CD4-positive, alpha-beta T cell (primary cell): ENCODE measurements at regions of chr4 and their contacts with region 1.

Region 1: DNA sequence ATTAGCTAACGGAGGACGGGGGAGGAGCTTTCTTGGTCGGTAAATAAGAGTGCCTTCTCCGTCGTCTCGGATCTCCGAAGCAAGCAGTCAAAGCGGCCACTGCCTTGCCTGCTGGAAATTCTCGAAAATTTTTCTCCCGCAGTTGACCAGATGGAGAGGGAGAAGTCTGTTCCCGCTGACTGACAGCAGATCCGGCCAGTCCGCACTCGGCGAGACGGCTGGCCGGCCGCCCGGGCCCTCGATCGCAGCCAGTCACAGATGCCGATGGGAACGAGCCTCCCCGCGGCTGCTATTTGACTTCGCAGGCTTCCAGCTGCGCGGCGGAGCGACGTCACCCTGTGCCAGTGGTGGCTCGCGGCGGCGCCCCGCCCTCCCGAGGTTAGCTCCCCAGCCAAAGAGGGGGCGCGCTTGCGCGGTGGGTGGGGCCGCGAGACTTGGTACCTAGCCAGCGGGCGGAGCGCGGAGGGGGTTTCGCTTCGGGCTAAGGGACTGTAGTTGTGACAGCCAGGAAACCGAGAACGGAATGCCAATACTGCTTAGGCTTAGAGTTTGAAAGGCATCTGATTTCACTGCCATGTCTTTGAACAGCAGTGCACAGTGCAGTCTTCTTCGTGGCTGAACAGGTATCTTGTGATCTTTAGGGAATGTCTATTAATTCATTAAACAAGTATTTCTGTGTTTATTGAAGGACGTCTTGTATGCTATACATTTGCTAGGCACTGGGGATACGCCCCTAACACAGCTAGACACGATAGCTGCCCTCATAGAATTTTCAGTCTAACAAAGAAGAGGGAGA is at the start of gene PPM1K:
- DNase-seq: peak; percentile 98 to 100 (median 99)
- ATAC-seq: peak; percentile 79
- H3K4me3 ChIP-seq: peak within 1 kb of the TSS; percentile 90
- H3K4me3 Mint-ChIP-seq: peak within 1 kb of the TSS; percentile 95
- H3K27ac ChIP-seq: peak within 1 kb of the TSS; percentile 98
- H3K27ac Mint-ChIP-seq: peak within 1 kb of the TSS; percentile 99
- H3K4me1 ChIP-seq: peaks cover 30% of the 10 kb centered on the region
- H3K4me1 Mint-ChIP-seq: peaks cover 45% of the 10 kb centered on the region
- H3K27me3 ChIP-seq: no peaks in the 10 kb centered on the region
- H3K27me3 Mint-ChIP-seq: no peaks in the 10 kb centered on the region
- CTCF ChIP-seq: peak; percentile 9
- total RNA-seq, gene PPM1K: 71.0 to 78.1 TPM

Region 2: DNA sequence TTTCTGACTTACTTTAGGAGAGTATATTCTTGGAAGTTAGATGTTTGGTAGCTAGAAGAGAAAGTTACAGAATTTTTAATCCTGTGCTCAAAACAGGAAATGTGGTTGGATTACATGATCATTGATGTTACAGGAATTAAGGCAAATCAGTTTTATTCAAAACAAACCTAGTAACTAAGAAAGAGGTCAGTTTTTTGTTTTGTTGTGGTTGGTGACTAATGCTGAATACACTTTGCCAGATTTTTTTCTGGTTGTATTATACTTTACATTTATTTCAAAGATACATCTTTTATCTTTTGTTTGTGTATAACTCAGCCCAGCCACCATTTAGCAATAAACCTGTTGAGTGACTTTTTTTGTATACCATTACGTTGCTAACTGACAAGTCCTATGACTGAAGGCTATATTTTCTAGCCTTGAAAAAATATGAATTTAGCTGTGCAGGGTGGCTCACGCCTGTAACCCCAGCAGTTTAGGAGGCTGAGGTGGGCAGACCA is 1180.9 kb before region 1 on chr4:
- CTCF ChIA-PET with region 1: no interaction called
- POLR2A ChIA-PET with region 1: no interaction called
- intact Hi-C with region 1: loop called in 1 of 2 experiments (anchors 5 kb)
- DNase-seq: peak in 4 of 14 experiments; percentile 8 to 75 (median 70)
- ATAC-seq: peak; percentile 77
- H3K4me3 ChIP-seq: no peak overlapping the region
- H3K4me3 Mint-ChIP-seq: peak overlapping the region; percentile 78
- H3K27ac ChIP-seq: peak overlapping the region; percentile 78 to 88
- H3K27ac Mint-ChIP-seq: peak overlapping the region; percentile 93
- H3K4me1 ChIP-seq: peaks cover 16% of the 10 kb centered on the region
- H3K4me1 Mint-ChIP-seq: peaks cover 67% of the 10 kb centered on the region
- H3K27me3 ChIP-seq: no peaks in the 10 kb centered on the region
- H3K27me3 Mint-ChIP-seq: no peaks in the 10 kb centered on the region
- CTCF ChIP-seq: no peak

Region 3: GRCh38 chr4:88297725-88298454 is 13.3 kb after region 1 on chr4:
- CTCF ChIA-PET with region 1: interaction called, 3 read pairs
- POLR2A ChIA-PET with region 1: interaction called, 10 read pairs
- intact Hi-C with region 1: no loop called
- DNase-seq: no peak
- ATAC-seq: no peak
- H3K4me3 ChIP-seq: no peak overlapping the region
- H3K4me3 Mint-ChIP-seq: no peak overlapping the region
- H3K27ac ChIP-seq: no peak overlapping the region
- H3K27ac Mint-ChIP-seq: no peak overlapping the region
- H3K4me1 ChIP-seq: no peaks in the 10 kb centered on the region
- H3K4me1 Mint-ChIP-seq: no peaks in the 10 kb centered on the region
- H3K27me3 ChIP-seq: no peaks in the 10 kb centered on the region
- H3K27me3 Mint-ChIP-seq: no peaks in the 10 kb centered on the region
- CTCF ChIP-seq: no peak

Region 4: DNA sequence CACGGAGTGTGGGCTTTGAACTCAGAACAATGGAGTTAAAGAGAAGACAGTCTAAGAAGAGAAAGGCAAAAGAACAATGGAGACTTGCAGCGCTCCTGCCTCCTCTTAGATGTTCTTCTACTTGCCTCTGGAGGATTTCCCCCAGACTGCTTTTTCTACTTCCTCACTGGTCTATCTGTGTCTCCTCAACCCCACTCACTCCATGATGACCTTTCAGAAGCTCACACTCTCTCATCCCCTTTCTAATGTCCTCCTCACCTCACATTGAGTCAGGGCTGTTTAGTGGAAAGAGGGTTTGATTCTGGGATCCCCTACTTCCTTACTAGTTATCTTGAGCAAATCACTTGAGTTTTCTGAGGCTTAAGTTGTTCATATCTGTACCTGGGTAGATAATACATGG is 81.8 kb after region 1 on chr4:
- CTCF ChIA-PET with region 1: no interaction called
- POLR2A ChIA-PET with region 1: interaction called, 11 read pairs
- intact Hi-C with region 1: no loop called
- DNase-seq: no peak
- ATAC-seq: no peak
- H3K4me3 ChIP-seq: no peak overlapping the region
- H3K4me3 Mint-ChIP-seq: no peak overlapping the region
- H3K27ac ChIP-seq: no peak overlapping the region
- H3K27ac Mint-ChIP-seq: no peak overlapping the region
- H3K4me1 ChIP-seq: no peaks in the 10 kb centered on the region
- H3K4me1 Mint-ChIP-seq: no peaks in the 10 kb centered on the region
- H3K27me3 ChIP-seq: no peaks in the 10 kb centered on the region
- H3K27me3 Mint-ChIP-seq: no peaks in the 10 kb centered on the region
- CTCF ChIP-seq: no peak

Region 5: DNA sequence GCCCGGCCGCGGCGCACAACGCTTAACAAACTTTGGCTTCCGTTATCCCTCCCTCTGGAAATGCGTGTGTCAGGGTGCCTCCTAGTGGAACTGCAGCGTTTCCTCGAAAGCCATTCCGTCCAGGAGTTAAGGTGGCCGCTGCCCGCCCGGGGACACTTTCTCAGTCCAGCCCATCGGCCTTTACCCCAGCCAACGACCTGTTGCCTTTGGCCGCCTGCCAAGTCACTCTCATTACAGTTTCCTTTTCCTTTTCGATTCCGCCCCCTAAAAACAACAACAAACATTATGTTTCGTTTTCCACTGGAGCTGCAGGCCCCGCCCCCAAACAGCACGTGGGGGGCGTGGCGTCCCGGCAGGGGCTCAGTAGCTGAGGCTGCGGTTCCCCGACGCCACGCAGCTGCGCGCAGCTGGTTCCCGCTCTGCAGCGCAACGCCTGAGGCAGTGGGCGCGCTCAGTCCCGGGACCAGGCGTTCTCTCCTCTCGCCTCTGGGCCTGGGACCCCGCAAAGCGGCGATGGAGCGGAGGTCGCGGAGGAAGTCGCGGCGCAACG is 172.2 kb after region 1 on chr4 and contains the start of gene HERC5:
- CTCF ChIA-PET with region 1: interaction called, 4 read pairs
- POLR2A ChIA-PET with region 1: interaction called, 155 read pairs
- intact Hi-C with region 1: loop called (anchors 1 to 2 kb)
- DNase-seq: peak; percentile 83 to 97 (median 90)
- ATAC-seq: peak; percentile 96
- H3K4me3 ChIP-seq: peak within 1 kb of the TSS; percentile 85
- H3K4me3 Mint-ChIP-seq: peak within 1 kb of the TSS; percentile 96
- H3K27ac ChIP-seq: peak within 1 kb of the TSS; percentile 6 to 65
- H3K27ac Mint-ChIP-seq: peak within 1 kb of the TSS; percentile 85
- H3K4me1 ChIP-seq: peaks cover 20% of the 10 kb centered on the region
- H3K4me1 Mint-ChIP-seq: peaks cover 42% of the 10 kb centered on the region
- H3K27me3 ChIP-seq: no peaks in the 10 kb centered on the region
- H3K27me3 Mint-ChIP-seq: no peaks in the 10 kb centered on the region
- CTCF ChIP-seq: peak; percentile 32
- total RNA-seq, gene HERC5: 23.6 to 23.9 TPM

Region 6: DNA sequence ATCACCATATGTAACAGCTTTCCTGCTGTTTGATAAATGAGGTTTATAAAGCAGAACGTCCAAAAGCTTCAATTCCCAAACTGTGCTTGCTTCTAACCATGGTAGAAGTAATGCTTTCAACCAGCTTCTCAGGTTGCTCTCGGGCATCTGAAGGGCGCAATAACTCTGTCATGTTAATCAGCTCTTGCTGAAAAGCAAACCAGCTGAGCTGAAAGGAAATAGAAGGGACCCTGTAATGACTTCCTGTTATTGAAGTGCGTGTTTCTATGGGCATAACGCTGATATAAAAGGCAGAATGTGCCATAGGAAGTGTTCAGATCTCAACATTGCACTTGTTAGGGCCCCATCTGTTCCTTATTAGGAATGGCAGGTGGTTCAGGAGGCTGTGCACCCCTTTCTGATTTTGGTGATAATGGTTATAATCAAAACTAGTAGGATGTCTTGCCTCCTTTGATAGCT is 328.8 kb after region 1 on chr4:
- CTCF ChIA-PET with region 1: no interaction called
- POLR2A ChIA-PET with region 1: interaction called, 37 read pairs
- intact Hi-C with region 1: loop called in 1 of 2 experiments (anchors 5 kb)
- DNase-seq: peak in 12 of 14 experiments; percentile 20 to 90 (median 40)
- ATAC-seq: peak; percentile 95
- H3K4me3 ChIP-seq: peak overlapping the region; percentile 30
- H3K4me3 Mint-ChIP-seq: peak overlapping the region; percentile 80
- H3K27ac ChIP-seq: peak overlapping the region; percentile 80 to 87
- H3K27ac Mint-ChIP-seq: peak overlapping the region; percentile 95
- H3K4me1 ChIP-seq: peaks cover 44% of the 10 kb centered on the region
- H3K4me1 Mint-ChIP-seq: peaks cover 86% of the 10 kb centered on the region
- H3K27me3 ChIP-seq: no peaks in the 10 kb centered on the region
- H3K27me3 Mint-ChIP-seq: no peaks in the 10 kb centered on the region
- CTCF ChIP-seq: no peak